Endothelial cell of umbilical vein (primary cell): ENCODE measurements at regions of chr1 and their contacts with region 1.

Region 1: GRCh38 chr1:228165372-228166169 is at the start of gene IBA57:
- DNase-seq: peak; percentile 99
- H3K4me3 ChIP-seq: peak within 1 kb of the TSS; percentile 6 to 67 (median 55)
- H3K27ac ChIP-seq: peak within 1 kb of the TSS; percentile 91
- H3K4me1 ChIP-seq: peaks cover 29% of the 10 kb centered on the region
- H3K27me3 ChIP-seq: no peaks in the 10 kb centered on the region
- CTCF ChIP-seq: peak; percentile 90 to 98
- POLR2A ChIP-seq: peak; percentile 77
- total RNA-seq, gene IBA57: 7.7 and 9.9 TPM in 2 replicates

Region 2: DNA sequence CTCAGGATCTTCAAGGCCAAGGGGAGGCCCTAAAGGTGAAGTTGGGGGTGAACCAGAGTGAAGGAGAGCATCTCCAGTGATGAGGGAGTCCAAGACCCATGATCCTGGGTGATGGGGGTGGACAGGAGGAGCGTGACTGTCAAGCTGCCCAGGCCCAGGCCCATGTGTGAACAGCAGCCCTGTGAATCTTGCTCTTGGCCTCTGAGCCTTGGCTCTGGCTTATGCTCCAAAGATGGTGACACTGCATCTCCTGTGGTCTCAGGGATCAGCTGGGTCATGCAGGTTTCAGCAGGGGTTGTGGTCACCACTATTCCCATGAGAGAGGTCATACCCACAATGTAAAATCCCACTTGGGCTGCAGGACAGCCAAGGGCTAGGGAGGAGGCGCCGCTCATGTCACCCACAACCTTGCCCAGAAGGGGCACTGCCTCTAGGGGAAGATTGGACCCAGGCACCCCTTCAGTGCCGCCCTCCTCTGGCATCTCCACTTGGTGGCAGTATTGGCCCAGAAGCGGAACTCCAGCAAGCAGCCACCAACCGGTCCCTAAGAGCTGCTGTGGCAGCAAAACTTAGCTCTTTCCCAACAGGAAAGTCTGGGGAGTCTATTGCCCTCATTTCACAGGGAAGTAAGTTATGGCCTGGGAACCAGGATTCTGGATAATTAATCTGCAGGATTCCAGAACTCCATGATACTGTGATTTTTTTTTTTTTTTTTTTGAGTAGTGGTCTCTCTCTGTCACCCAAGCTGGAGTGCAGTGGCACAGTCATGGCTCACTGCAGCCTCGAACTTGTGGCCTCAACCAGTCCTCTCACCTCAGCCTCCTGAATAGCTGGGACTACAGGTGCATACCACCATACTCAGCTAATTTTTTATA is 166.3 kb before region 1 on chr1:
- CTCF ChIA-PET with region 1: interaction called, 25 read pairs
- POLR2A ChIA-PET with region 1: no interaction called
- dilution Hi-C with region 1: no loop called
- intact Hi-C with region 1: loop called (anchors 1 kb)
- DNase-seq: peak; percentile 71
- H3K4me3 ChIP-seq: no peak overlapping the region
- H3K27ac ChIP-seq: no peak overlapping the region
- H3K4me1 ChIP-seq: no peaks in the 10 kb centered on the region
- H3K27me3 ChIP-seq: peaks cover 0 to 4% of the 10 kb centered on the region in 2 experiments
- CTCF ChIP-seq: peak; percentile 75 to 92
- POLR2A ChIP-seq: no peak

Region 3: DNA sequence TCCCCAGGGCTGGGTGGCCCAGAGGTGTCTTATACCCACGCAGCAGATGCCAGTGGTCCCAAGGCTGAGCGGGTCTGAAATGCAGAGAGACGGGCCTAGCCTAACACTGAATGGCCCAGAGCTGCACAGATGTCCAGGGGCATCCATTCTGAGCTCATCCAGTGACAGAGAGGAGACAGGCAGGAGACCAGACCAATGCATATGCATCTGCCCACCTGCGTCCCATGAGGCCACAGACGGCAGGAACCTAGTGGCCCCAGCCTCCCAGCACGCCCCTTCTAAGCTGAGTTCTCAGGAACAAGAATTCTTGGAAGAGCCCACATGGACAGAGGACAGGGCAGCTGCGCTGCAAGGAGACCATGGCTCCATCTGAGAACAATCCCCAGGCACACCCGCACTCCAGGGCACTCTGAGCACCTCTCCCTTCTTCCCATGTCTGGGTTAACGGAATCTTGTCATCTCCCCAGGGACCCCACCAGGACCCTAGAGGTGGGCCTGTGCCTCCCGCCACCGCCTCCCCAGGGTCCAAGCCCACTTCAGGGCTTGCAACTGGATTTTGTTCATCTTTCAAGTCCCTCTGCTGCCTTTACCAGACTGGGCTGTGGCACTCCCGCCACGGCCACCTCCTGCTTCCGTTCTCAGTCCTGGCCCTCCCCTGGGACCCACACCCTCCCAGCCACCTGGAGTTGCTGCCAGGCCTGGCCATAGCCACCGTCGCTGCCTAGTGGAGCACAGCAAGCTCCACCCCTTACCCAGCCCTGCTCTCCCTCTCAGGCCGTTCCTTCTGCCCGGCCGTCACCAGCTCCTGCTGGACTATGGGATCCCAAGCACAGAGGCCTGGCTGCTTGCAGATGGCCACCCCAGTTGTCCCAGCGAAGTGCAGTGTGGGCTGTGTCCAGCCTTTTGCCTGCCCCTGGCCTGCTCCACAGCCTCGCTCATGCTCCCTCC is 155.5 kb before region 1 on chr1:
- CTCF ChIA-PET with region 1: no interaction called
- POLR2A ChIA-PET with region 1: no interaction called
- dilution Hi-C with region 1: no loop called
- intact Hi-C with region 1: no loop called
- DNase-seq: no peak
- H3K4me3 ChIP-seq: no peak overlapping the region
- H3K27ac ChIP-seq: no peak overlapping the region
- H3K4me1 ChIP-seq: no peaks in the 10 kb centered on the region
- H3K27me3 ChIP-seq: peaks cover 47 to 48% of the 10 kb centered on the region in 2 experiments
- CTCF ChIP-seq: no peak
- POLR2A ChIP-seq: no peak

Region 4: DNA sequence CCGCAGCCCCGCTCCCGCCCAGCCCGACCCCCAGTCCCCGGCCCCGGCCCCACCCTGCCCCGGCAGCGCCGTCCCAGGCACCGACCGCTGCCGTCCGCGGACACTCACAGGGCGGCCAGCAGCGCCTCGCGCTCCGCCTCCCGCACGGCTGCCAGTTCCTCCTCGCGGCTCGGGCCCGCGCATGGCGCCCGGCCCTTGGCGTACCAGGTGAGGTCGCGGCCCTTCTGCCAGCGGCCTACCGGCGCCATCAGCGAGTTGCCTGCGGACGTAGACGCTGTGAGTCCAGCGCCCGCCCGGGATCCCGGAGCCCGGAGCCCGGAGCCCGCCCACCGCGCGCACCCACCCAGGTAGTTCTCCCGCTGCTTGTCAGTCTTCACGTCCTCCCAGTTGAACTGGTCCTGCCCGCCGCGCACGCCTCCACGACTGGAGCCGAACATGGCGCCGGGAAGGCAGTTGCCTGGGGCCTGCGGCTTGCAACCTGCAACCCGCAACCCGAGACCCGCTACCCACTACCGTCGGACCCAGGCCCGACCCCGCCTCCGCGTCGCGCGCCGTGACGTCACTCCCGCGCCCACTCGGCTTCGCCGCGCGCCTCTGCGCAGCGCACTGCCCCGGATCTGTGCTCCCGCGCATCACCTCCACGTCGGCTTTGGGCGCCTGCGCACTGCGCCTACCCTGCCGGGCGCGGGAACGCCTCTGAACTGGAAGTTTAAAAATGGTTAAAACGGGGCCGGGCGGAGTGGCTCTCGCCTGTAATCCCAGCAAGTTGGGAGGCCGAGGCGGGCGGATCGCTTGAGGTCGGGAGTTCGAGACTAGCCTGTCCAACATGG is 62.6 kb before region 1 on chr1 and contains the start of gene C1orf35:
- CTCF ChIA-PET with region 1: no interaction called
- POLR2A ChIA-PET with region 1: no interaction called
- dilution Hi-C with region 1: no loop called
- intact Hi-C with region 1: loop called (anchors 1 kb)
- DNase-seq: peak; percentile 95
- H3K4me3 ChIP-seq: peak within 1 kb of the TSS; percentile 53 to 57 (median 53)
- H3K27ac ChIP-seq: peak within 1 kb of the TSS; percentile 5
- H3K4me1 ChIP-seq: peaks cover 10% of the 10 kb centered on the region
- H3K27me3 ChIP-seq: no peaks in the 10 kb centered on the region
- CTCF ChIP-seq: no peak
- POLR2A ChIP-seq: no peak
- total RNA-seq, gene C1orf35: 21.7 and 23.9 TPM in 2 replicates

Region 5: DNA sequence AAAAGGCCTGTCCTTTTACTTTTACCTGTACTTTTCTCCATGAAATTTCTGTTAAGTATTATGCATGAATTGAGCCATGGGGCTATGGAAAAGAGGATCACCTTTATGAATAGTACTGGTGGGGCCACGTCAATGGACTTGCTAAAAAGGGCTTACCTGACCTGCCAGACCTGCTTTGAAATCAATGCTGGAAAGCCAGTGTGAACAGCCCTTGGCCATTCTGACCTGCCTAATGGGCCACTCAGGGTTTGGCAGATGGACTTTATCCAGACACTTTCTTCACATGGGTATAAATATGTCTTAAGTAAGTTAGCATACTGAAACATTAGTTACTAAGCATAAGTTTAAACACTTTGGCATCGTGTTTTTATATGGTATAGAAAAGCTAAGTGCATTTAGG is 33.8 kb before region 1 on chr1:
- CTCF ChIA-PET with region 1: interaction called, 43 read pairs
- POLR2A ChIA-PET with region 1: no interaction called
- dilution Hi-C with region 1: no loop called
- intact Hi-C with region 1: no loop called
- DNase-seq: no peak
- H3K4me3 ChIP-seq: no peak overlapping the region
- H3K27ac ChIP-seq: no peak overlapping the region
- H3K4me1 ChIP-seq: no peaks in the 10 kb centered on the region
- H3K27me3 ChIP-seq: peaks cover 16 to 19% of the 10 kb centered on the region in 2 experiments
- CTCF ChIP-seq: no peak
- POLR2A ChIP-seq: no peak

Region 6: GRCh38 chr1:228148196-228148861 is 17.2 kb before region 1 on chr1:
- CTCF ChIA-PET with region 1: interaction called, 12 read pairs
- POLR2A ChIA-PET with region 1: interaction called, 6 read pairs
- dilution Hi-C with region 1: no loop called
- intact Hi-C with region 1: loop called (anchors 1 kb)
- DNase-seq: peak; percentile 20
- H3K4me3 ChIP-seq: no peak overlapping the region
- H3K27ac ChIP-seq: peak overlapping the region; percentile 38
- H3K4me1 ChIP-seq: peaks cover 16% of the 10 kb centered on the region
- H3K27me3 ChIP-seq: no peaks in the 10 kb centered on the region
- CTCF ChIP-seq: no peak
- POLR2A ChIP-seq: no peak

Region 7: GRCh38 chr1:228405987-228406265 is 240.4 kb after region 1 on chr1:
- CTCF ChIA-PET with region 1: no interaction called
- POLR2A ChIA-PET with region 1: no interaction called
- dilution Hi-C with region 1: no loop called
- intact Hi-C with region 1: loop called (anchors 5 kb)
- DNase-seq: no peak
- H3K4me3 ChIP-seq: peak overlapping the region; percentile 70 to 96 (median 73)
- H3K27ac ChIP-seq: no peak overlapping the region
- H3K4me1 ChIP-seq: peaks cover 23% of the 10 kb centered on the region
- H3K27me3 ChIP-seq: no peaks in the 10 kb centered on the region
- CTCF ChIP-seq: no peak
- POLR2A ChIP-seq: no peak

Region 8: DNA sequence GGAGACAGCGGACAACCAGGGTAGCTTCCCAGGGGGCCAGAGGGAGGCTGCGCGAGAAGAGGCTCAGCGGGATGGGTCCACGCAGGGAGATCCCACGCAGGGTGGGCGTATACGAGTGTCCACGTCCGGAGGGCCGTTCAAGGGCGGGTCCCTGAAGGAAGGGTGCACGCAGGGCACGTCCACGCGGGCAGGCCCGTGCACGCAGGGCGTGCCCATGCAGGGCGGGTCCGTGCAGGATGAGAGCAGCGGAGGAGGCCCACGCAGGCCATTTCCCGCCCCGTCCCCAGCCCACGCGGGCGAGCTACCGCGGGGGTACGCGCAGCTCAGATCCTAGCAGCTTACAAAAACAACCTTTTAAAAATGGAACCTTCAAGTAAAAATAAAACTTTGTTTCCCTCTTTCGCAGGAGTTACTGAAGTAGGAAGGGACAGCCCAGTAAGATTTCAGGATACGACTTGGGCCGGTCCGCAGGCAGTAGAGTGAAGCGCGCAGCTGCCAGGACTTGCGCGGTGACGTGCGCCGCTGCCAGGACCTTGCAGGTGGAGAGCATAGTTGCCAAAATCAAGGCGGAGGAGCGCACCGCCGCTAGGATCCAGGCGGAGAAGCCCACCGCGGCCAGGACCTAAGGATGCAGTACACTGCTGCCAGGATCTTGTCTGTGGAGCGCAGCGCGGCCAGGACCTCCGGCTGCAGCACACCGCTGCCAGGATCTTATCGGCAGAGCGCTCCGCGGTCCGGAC is 321.2 kb after region 1 on chr1:
- CTCF ChIA-PET with region 1: no interaction called
- POLR2A ChIA-PET with region 1: no interaction called
- dilution Hi-C with region 1: no loop called
- intact Hi-C with region 1: loop called (anchors 5 kb)
- DNase-seq: peak; percentile 94
- H3K4me3 ChIP-seq: peak overlapping the region; percentile 4 to 79 (median 46)
- H3K27ac ChIP-seq: peak overlapping the region; percentile 72
- H3K4me1 ChIP-seq: no peaks in the 10 kb centered on the region
- H3K27me3 ChIP-seq: no peaks in the 10 kb centered on the region
- CTCF ChIP-seq: no peak
- POLR2A ChIP-seq: peak; percentile 65